Activated CD4-positive, alpha-beta T cell treated with anti-CD3 and anti-CD28 coated beads for 36 hours (primary cell): ENCODE measurements at regions of chr14 and their contacts with region 1.

Region 1: DNA sequence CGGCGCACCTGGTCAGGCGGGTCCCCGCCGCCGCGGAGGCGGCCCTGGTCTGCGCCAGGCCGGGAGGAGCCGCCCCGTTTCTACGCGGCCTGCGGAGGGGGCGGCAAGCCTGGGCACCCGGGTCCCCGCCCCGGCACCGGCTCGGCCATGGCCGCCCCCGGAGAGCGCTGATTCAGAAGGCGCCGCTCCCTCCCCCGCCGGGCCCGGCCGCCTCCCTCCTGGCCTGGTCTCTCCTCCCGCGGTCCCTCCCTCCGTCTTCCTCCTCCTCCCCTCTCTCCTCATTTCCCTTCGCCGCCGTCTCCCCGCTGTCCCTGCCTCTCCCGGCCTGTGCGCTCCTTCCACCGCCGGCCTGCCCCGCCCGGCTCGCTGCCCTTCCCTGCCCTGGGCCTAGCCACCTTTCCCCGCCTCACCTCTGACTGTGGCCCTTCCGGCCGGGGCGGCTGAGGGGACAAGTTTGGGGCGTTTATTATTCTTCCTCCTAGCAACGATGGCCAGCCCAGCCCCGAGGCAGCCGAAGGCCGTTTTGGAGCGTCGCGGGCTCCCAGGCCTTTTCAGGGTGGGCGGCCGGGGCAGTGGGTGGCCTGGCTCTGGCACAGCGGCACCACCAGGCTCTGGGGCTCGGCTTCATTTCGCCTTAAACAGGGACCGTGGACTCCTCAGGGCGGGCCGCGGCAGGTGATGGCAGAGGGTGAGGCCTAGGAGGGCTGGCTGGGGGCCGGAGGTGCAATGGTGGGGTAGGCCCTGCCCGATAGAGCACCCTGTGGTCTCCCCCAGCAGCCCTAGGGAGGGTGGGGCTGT is 775 bp downstream of the CEP170B start:
- DNase-seq: peak; percentile 62
- ATAC-seq: peak; percentile 57
- H3K4me3 Mint-ChIP-seq: peak overlapping the region; percentile 60
- H3K27ac Mint-ChIP-seq: no peak overlapping the region
- H3K4me1 Mint-ChIP-seq: peaks cover 2% of the 10 kb centered on the region
- H3K27me3 Mint-ChIP-seq: peaks cover 7% of the 10 kb centered on the region

Region 2: DNA sequence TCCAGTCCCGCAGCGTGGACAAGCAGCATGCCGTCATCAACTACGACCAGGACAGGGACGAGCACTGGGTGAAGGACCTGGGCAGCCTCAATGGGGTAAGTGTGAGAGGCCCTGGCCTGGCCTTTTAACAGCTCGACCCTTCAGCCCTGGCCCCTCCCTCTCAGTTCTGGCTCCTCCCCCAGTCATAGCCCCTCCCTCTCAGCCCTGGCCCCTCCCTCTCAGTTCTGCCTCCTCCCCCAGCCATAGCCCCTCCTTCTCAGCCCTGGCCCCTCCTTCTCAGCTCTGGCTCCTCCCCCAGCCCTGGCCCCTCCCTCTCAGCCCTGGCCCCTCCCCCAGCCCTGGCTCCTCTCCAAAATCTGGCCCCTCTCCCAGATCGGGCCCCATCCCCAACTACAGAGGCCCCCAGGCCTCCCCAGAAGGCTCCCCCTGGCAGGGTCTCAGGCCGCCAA is 10.4 kb after region 1 on chr14:
- CTCF ChIA-PET with region 1: no interaction called
- POLR2A ChIA-PET with region 1: no interaction called
- intact Hi-C with region 1: loop called in 1 of 2 experiments (anchors 1 kb)
- DNase-seq: peak; percentile 69
- ATAC-seq: peak; percentile 99
- H3K4me3 Mint-ChIP-seq: no peak overlapping the region
- H3K27ac Mint-ChIP-seq: no peak overlapping the region
- H3K4me1 Mint-ChIP-seq: no peaks in the 10 kb centered on the region
- H3K27me3 Mint-ChIP-seq: no peaks in the 10 kb centered on the region